ENCODE measurements at regions of chr16 and their contacts with region 1.

Region 1: DNA sequence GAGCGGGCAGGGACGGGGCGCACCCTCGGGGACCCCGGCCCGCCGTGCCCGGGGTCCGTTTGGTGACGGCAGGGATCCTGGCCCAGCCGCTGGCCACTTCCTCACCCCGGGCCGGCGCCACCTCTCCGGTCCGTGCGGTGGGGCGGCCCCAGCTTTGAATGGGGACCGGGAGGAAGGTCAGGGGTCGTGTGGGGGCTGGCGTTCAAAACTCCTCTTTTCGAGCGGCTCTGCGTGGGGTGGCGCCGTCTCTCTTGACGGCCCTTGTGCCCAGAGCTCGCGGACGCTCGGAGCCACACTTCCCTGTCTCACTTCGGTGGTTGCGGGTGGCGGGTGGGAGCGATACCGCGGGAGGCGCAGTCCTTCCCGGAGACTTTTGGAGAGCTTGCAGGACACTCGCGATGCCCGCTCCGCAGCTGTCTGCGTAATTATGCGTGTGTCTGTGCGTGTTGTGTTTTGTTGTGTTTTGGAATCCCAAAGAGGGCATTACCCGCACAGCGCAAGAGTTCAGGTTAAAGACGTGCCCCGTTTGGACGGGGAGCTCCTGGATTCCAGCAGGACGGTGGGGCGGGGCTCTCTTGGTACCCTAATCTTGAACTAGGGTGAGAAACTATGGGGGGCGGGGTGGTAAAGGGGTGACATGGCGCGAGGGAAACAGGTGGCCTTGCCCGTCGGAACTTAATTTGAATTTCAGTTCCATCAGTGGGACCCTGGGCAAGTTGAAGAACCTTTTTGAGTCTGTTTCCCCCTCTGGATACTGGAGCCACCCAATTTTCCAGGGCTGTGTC is 637 bp downstream of the PLCG2 start:
- DNase-seq: peak; percentile 29 to 52 (median 43)
- H3K4me3 ChIP-seq: peak overlapping the region in 3 of 4 donors; percentile 53 to 92 (median 62)
- H3K27ac ChIP-seq: peak overlapping the region in 3 of 5 donors; percentile 34 to 73 (median 42)
- H3K4me1 ChIP-seq: no peaks in the 10 kb centered on the region
- H3K27me3 ChIP-seq: no peaks in the 10 kb centered on the region
- CTCF ChIP-seq: no peak
- POLR2A ChIP-seq: no peak

Region 2: GRCh38 chr16:81873843-81874752 is 94.4 kb after region 1 on chr16:
- intact Hi-C with region 1: loop called in 1 of 2 experiments (anchors 10 kb)
- DNase-seq: peak; percentile 33 to 84 (median 69)
- H3K4me3 ChIP-seq: no peak overlapping the region
- H3K27ac ChIP-seq: no peak overlapping the region
- H3K4me1 ChIP-seq: no peaks in the 10 kb centered on the region
- H3K27me3 ChIP-seq: no peaks in the 10 kb centered on the region
- CTCF ChIP-seq: peak; percentile 55 to 80 (median 69)
- POLR2A ChIP-seq: no peak